K562 (cell line): ENCODE measurements at regions of chr1 and their contacts with region 1.

Region 1: GRCh38 chr1:116405241-116406135 is 32.4 kb downstream of the ATP1A1 start:
- DNase-seq: peak in 1 of 4 experiments; percentile 48
- ATAC-seq: peak; percentile 9
- H3K4me3 ChIP-seq: no peak overlapping the region
- H3K27ac ChIP-seq: peak overlapping the region; percentile 1; the same call in 2 of the 3 replicates
- H3K4me1 ChIP-seq: peaks cover 30 to 60% of the 10 kb centered on the region in 2 experiments; a peak in 4 of 5 replicates
- H3K27me3 ChIP-seq: no peaks in the 10 kb centered on the region
- CTCF ChIP-seq: no peak
- EP300 ChIP-seq: peak; percentile 44; the same call in 1 of the 2 replicates
- POLR2A ChIP-seq: peak; percentile 53; the same call in 1 of the 2 replicates
- RAD21 ChIP-seq: no peak

Region 2: GRCh38 chr1:116390195-116390594 is 15.3 kb before region 1 on chr1:
- CTCF ChIA-PET with region 1: interaction called, 3 read pairs
- POLR2A ChIA-PET with region 1: interaction called, 14 read pairs
- in situ Hi-C with region 1: no loop called
- intact Hi-C with region 1: no loop called
- DNase-seq: no peak
- ATAC-seq: no peak
- H3K4me3 ChIP-seq: no peak overlapping the region
- H3K27ac ChIP-seq: no peak overlapping the region
- H3K4me1 ChIP-seq: peaks cover 0 to 6% of the 10 kb centered on the region in 2 experiments; a peak in 2 of 5 replicates
- H3K27me3 ChIP-seq: no peaks in the 10 kb centered on the region
- CTCF ChIP-seq: no peak
- EP300 ChIP-seq: no peak
- POLR2A ChIP-seq: no peak
- RAD21 ChIP-seq: no peak